Naive thymus-derived CD4-positive, alpha-beta T cell (primary cell): ENCODE measurements at regions of chr16 and their contacts with region 1.

Region 1: DNA sequence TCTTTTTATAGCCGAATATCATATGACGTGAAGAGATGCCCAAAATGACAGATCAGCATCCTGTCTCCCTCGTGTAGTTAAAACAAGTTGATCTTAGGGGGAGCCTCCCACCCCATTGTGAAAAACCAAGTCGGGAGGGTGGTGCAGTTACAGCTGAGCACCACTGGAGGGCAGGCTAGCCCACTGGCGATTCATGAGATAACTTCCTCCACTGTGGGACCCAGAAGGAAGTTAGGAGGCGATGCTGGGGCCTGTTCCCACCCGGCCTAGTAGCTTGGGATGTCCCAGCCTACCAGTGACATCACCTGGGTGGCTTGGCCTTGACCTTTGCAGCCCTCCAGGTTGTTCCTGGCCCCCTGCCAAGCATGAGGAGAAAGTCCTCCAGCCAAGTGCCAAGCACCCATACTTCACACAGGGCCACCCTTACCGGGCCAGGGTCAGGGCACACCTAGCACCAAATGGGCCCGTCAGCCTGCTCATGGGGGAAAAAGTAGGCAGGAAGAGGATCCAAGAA is 8.1 kb upstream of the CPNE2 start:
- DNase-seq: peak; percentile 52 to 86 (median 80)
- ATAC-seq: peak; percentile 98
- H3K4me3 ChIP-seq: no peak overlapping the region
- H3K4me3 Mint-ChIP-seq: peak overlapping the region in 2 of 10 donors; percentile 3 to 37
- H3K27ac ChIP-seq: peak overlapping the region; percentile 72
- H3K27ac Mint-ChIP-seq: peak overlapping the region; percentile 19 to 97 (median 90)
- H3K4me1 ChIP-seq: peaks cover 11% of the 10 kb centered on the region in 2 donors
- H3K4me1 Mint-ChIP-seq: peaks cover 6 to 16% (median 14%) of the 10 kb centered on the region in 7 donors
- H3K27me3 ChIP-seq: no peaks in the 10 kb centered on the region
- H3K27me3 Mint-ChIP-seq: no peaks in the 10 kb centered on the region

Region 2: DNA sequence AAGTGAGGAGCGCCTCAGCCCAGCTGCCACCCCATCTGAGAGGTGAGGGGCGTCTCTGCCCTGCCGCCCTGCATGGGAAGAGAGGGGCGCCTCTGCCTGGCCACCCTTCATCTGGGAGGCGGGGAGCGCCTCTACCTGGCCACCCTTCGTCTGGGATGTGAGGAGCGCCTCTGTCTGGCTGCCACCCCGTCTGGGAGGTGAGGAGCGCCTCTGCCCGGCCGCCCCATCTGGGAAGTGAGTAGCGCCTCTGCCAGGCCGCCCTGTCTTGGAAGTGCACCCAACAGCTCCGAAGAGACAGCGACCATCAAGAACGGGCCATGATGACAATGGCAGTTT is 1094.8 kb before region 1 on chr16:
- CTCF ChIA-PET with region 1: no interaction called
- POLR2A ChIA-PET with region 1: no interaction called
- intact Hi-C with region 1: no loop called
- DNase-seq: no peak
- ATAC-seq: no peak
- H3K4me3 ChIP-seq: no peak overlapping the region
- H3K4me3 Mint-ChIP-seq: no peak overlapping the region
- H3K27ac ChIP-seq: no peak overlapping the region
- H3K27ac Mint-ChIP-seq: no peak overlapping the region
- H3K4me1 ChIP-seq: no peaks in the 10 kb centered on the region
- H3K4me1 Mint-ChIP-seq: no peaks in the 10 kb centered on the region
- H3K27me3 ChIP-seq: no peaks in the 10 kb centered on the region
- H3K27me3 Mint-ChIP-seq: peaks cover 0 to 29% (median 20%) of the 10 kb centered on the region in 5 donors

Region 3: GRCh38 chr16:56807011-56807675 is 277.2 kb before region 1 on chr16:
- CTCF ChIA-PET with region 1: no interaction called
- POLR2A ChIA-PET with region 1: no interaction called
- intact Hi-C with region 1: no loop called
- DNase-seq: no peak
- ATAC-seq: no peak
- H3K4me3 ChIP-seq: no peak overlapping the region
- H3K4me3 Mint-ChIP-seq: no peak overlapping the region
- H3K27ac ChIP-seq: no peak overlapping the region
- H3K27ac Mint-ChIP-seq: no peak overlapping the region
- H3K4me1 ChIP-seq: no peaks in the 10 kb centered on the region
- H3K4me1 Mint-ChIP-seq: peaks cover 0 to 2% (median 0%) of the 10 kb centered on the region in 7 donors
- H3K27me3 ChIP-seq: no peaks in the 10 kb centered on the region
- H3K27me3 Mint-ChIP-seq: no peaks in the 10 kb centered on the region

Region 4: GRCh38 chr16:56860226-56861020 is 223.9 kb before region 1 on chr16:
- CTCF ChIA-PET with region 1: no interaction called
- POLR2A ChIA-PET with region 1: no interaction called
- intact Hi-C with region 1: loop called in 1 of 2 experiments (anchors 5 kb)
- DNase-seq: peak in 8 of 9 donors; percentile 33 to 60 (median 44)
- ATAC-seq: peak; percentile 68
- H3K4me3 ChIP-seq: peak overlapping the region; percentile 25
- H3K4me3 Mint-ChIP-seq: peak overlapping the region; percentile 19 to 82 (median 74)
- H3K27ac ChIP-seq: peak overlapping the region; percentile 57
- H3K27ac Mint-ChIP-seq: peak overlapping the region; percentile 68 to 97 (median 91)
- H3K4me1 ChIP-seq: peaks cover 23 to 48% of the 10 kb centered on the region in 2 donors
- H3K4me1 Mint-ChIP-seq: peaks cover 0 to 54% (median 39%) of the 10 kb centered on the region in 7 donors
- H3K27me3 ChIP-seq: no peaks in the 10 kb centered on the region
- H3K27me3 Mint-ChIP-seq: no peaks in the 10 kb centered on the region

Region 5: GRCh38 chr16:57194512-57194911 is 110.2 kb after region 1 on chr16:
- CTCF ChIA-PET with region 1: no interaction called
- POLR2A ChIA-PET with region 1: no interaction called
- intact Hi-C with region 1: no loop called
- DNase-seq: no peak
- ATAC-seq: no peak
- H3K4me3 ChIP-seq: no peak overlapping the region
- H3K4me3 Mint-ChIP-seq: no peak overlapping the region
- H3K27ac ChIP-seq: no peak overlapping the region
- H3K27ac Mint-ChIP-seq: peak overlapping the region in 1 of 9 donors; percentile 6
- H3K4me1 ChIP-seq: peaks cover 0 to 6% of the 10 kb centered on the region in 2 donors
- H3K4me1 Mint-ChIP-seq: peaks cover 16 to 62% (median 56%) of the 10 kb centered on the region in 7 donors
- H3K27me3 ChIP-seq: no peaks in the 10 kb centered on the region
- H3K27me3 Mint-ChIP-seq: no peaks in the 10 kb centered on the region

Region 6: GRCh38 chr16:57284208-57284951 is 200.1 kb after region 1 on chr16 and contains the start of gene PLLP:
- CTCF ChIA-PET with region 1: no interaction called
- POLR2A ChIA-PET with region 1: no interaction called
- intact Hi-C with region 1: loop called in 1 of 2 experiments (anchors 10 kb)
- DNase-seq: peak; percentile 30 to 66 (median 51)
- ATAC-seq: peak; percentile 82
- H3K4me3 ChIP-seq: peak within 1 kb of the TSS; percentile 60
- H3K4me3 Mint-ChIP-seq: peak within 1 kb of the TSS; percentile 77 to 89 (median 84)
- H3K27ac ChIP-seq: peak within 1 kb of the TSS; percentile 59
- H3K27ac Mint-ChIP-seq: peak within 1 kb of the TSS in 8 of 9 donors; percentile 10 to 94 (median 64)
- H3K4me1 ChIP-seq: peaks cover 0 to 25% of the 10 kb centered on the region in 2 donors
- H3K4me1 Mint-ChIP-seq: peaks cover 20 to 51% (median 41%) of the 10 kb centered on the region in 7 donors
- H3K27me3 ChIP-seq: peaks cover 0 to 8% of the 10 kb centered on the region in 2 donors
- H3K27me3 Mint-ChIP-seq: peaks cover 0 to 41% (median 0%) of the 10 kb centered on the region in 5 donors
- total RNA-seq, gene PLLP: 0.36 to 8.4 (median 3.3) TPM

Region 7: DNA sequence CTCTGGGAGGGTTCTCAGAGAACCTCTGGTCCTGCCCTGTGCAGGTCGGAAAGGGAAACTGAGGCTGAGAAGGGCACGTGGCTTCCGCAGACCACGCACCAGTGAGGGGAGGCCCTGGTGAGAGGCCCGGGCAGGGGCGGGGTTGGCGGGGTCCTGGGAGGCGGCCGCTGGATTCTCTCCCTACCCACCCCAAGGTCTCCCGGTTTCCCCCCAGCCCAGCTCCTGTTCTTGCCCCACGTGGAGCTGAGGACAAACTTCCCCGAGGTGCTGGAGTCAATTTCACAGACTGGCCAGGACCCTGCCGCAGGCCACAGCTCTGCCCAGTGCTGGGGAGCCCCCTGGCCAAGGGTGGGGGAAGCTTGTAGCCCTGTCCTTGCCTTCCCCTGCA is 331.8 kb after region 1 on chr16:
- CTCF ChIA-PET with region 1: interaction called, 3 read pairs
- POLR2A ChIA-PET with region 1: no interaction called
- intact Hi-C with region 1: loop called (anchors 2 to 5 kb)
- DNase-seq: no peak
- ATAC-seq: no peak
- H3K4me3 ChIP-seq: no peak overlapping the region
- H3K4me3 Mint-ChIP-seq: no peak overlapping the region
- H3K27ac ChIP-seq: no peak overlapping the region
- H3K27ac Mint-ChIP-seq: no peak overlapping the region
- H3K4me1 ChIP-seq: peaks cover 11 to 18% of the 10 kb centered on the region in 2 donors
- H3K4me1 Mint-ChIP-seq: peaks cover 17 to 29% (median 23%) of the 10 kb centered on the region in 7 donors
- H3K27me3 ChIP-seq: no peaks in the 10 kb centered on the region
- H3K27me3 Mint-ChIP-seq: no peaks in the 10 kb centered on the region